ENCODE measurements at regions of chr20 and their contacts with region 1.

Region 1: DNA sequence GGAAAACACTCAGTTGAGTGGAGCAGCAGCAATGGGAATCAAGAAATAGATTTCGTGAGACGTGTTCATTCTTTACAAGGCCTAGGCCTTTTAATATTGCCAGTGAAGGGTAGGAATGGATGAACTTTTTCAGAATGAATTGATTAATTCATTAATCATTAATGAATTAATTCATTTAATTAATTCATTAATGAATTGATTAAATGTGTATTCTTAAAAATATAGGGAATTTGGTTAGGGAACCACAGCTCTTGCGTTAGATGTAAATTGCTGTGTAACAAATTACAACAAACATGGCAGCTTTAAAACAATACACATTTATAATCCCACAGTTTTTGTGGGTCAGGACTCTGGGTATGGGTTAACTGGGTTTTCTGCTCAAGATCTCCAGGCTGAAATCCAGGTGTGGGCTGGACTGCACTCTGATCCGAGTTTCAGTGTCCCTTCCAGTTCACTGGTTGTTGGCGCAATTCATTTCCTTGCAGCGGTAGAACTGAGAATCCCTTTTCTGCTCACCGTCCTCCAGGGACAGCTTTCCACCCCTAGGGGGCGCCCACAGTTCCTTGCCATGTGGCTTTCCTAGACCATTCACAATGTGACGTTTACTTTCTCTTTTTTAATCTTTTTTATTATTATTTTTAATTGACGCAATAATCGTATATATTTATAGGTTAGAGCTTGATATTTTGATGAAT is 32.8 kb upstream of the BCAS1 start:
- DNase-seq: peak; percentile 83
- H3K4me3 Mint-ChIP-seq: no peak overlapping the region
- H3K27ac Mint-ChIP-seq: no peak overlapping the region
- H3K4me1 Mint-ChIP-seq: peaks cover 21% of the 10 kb centered on the region
- H3K27me3 Mint-ChIP-seq: no peaks in the 10 kb centered on the region
- CTCF ChIP-seq: peak; percentile 77

Region 2: DNA sequence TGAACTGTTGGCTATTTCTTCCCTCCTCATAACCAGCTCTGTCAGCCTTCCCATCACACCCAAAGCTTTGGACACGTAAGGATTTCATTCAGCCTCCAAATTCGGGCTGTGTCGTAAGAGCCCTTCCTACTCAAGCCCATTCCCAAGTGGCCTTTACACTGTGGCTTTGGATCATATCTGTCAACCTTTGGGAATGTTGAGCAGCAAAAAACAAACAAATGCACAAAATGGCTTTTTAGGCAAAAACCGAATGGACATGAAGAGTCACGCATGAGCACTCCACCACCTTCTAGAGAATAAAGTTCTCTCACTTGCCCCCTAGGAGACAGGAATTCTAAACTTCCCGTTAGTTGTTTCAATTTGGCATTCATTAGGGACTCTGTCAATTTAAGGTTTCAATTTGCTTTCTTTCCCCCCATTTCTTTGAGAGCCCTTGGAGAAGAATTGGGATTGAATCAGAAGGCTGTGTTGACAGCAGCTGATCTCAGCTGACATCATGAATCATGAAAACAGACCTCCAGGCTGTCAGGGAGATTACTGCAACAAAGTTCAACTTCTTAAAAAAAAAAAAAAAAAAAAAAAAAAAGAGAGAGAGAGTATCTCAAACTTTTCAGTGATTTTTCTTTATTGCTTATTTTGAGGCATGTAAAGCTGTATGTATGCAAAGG is 143.2 kb before region 1 on chr20:
- CTCF ChIA-PET with region 1: no interaction called
- POLR2A ChIA-PET with region 1: no interaction called
- intact Hi-C with region 1: no loop called
- DNase-seq: no peak
- H3K4me3 Mint-ChIP-seq: no peak overlapping the region
- H3K27ac Mint-ChIP-seq: no peak overlapping the region
- H3K4me1 Mint-ChIP-seq: peaks cover 14% of the 10 kb centered on the region
- H3K27me3 Mint-ChIP-seq: no peaks in the 10 kb centered on the region
- CTCF ChIP-seq: no peak

Region 3: GRCh38 chr20:54062812-54063280 is 40.4 kb before region 1 on chr20:
- CTCF ChIA-PET with region 1: interaction called, 15 read pairs
- POLR2A ChIA-PET with region 1: interaction called, 11 read pairs
- intact Hi-C with region 1: no loop called
- DNase-seq: peak; percentile 64
- H3K4me3 Mint-ChIP-seq: no peak overlapping the region
- H3K27ac Mint-ChIP-seq: no peak overlapping the region
- H3K4me1 Mint-ChIP-seq: peaks cover 21% of the 10 kb centered on the region
- H3K27me3 Mint-ChIP-seq: no peaks in the 10 kb centered on the region
- CTCF ChIP-seq: peak; percentile 59

Region 4: GRCh38 chr20:54123587-54124180 is 20.5 kb after region 1 on chr20:
- CTCF ChIA-PET with region 1: interaction called, 66 read pairs
- POLR2A ChIA-PET with region 1: interaction called, 52 read pairs
- intact Hi-C with region 1: no loop called
- DNase-seq: peak; percentile 99
- H3K4me3 Mint-ChIP-seq: peak overlapping the region; percentile 45
- H3K27ac Mint-ChIP-seq: peak overlapping the region; percentile 96
- H3K4me1 Mint-ChIP-seq: peaks cover 37% of the 10 kb centered on the region
- H3K27me3 Mint-ChIP-seq: no peaks in the 10 kb centered on the region
- CTCF ChIP-seq: no peak

Region 5: DNA sequence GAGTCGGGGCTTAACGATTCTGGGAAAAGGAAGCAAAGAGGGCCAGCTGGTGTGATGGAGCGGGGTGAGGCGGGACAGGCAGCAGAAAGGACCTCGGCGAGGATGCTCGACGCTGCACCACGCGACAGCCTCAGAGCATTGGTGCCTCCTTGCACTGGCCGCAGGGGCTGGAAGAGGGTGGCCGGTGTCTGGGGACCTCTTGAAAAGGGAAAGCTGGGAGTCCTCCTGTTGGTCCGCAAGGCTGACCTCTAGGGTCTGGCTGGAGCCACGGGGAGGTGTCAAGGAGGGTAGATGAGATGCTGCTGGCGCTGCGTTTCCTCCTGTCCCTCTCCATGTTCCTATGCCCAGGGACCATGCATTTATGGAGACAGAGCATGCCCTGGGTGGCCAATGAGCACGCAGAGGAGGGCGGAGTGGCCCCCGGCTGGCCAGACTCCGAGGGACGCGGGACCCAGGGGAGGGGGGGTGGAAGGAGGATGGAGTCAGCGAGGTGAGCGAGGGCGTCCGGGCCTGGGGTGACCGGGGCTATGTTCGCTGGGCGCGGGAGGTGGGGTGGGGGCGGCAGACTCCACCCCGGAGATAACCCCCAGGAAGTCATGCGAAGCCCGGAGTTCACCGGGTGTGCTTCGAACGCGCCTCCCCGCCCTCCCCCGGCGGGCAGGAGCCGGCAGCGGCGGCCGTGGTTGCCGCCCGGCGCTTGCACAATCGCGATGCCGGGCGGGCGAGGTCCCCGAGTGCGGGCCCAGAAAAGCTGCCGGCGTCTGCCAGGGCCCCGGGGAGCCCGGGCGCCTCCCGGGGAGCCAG is 70.6 kb after region 1 on chr20 and contains the start of gene CYP24A1:
- CTCF ChIA-PET with region 1: interaction called, 25 read pairs
- POLR2A ChIA-PET with region 1: interaction called, 13 read pairs
- intact Hi-C with region 1: no loop called
- DNase-seq: peak; percentile 41
- H3K4me3 Mint-ChIP-seq: peak within 1 kb of the TSS; percentile 67
- H3K27ac Mint-ChIP-seq: no peak within 1 kb of the TSS
- H3K4me1 Mint-ChIP-seq: peaks cover 20% of the 10 kb centered on the region
- H3K27me3 Mint-ChIP-seq: no peaks in the 10 kb centered on the region
- CTCF ChIP-seq: no peak
- total RNA-seq, gene CYP24A1: 0.28 and 0.34 TPM in 2 replicates

Region 6: GRCh38 chr20:54188132-54188849 is 85.1 kb after region 1 on chr20:
- CTCF ChIA-PET with region 1: interaction called, 1,436 read pairs
- POLR2A ChIA-PET with region 1: interaction called, 10 read pairs
- intact Hi-C with region 1: no loop called
- DNase-seq: no peak
- H3K4me3 Mint-ChIP-seq: no peak overlapping the region
- H3K27ac Mint-ChIP-seq: no peak overlapping the region
- H3K4me1 Mint-ChIP-seq: peaks cover 24% of the 10 kb centered on the region
- H3K27me3 Mint-ChIP-seq: no peaks in the 10 kb centered on the region
- CTCF ChIP-seq: no peak

Region 7: DNA sequence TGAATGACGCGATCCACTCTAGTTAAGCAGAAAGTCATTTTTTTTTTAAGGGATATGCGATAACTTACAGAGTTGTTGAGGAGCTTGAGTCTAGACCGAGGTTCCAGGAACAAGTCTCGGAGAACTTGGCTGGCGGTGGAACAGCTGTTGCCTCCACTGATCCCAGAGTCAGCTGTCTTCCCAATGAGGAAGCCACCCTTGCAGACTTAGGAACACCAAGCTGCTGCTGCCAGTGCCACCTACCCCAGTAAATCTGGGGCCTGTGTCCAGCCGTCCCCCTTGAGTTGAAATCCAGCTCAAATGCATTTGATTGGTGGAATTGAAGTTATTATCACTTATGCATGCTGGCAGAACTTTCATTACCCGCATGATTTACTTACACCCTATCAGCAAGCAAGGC is 111.4 kb after region 1 on chr20:
- CTCF ChIA-PET with region 1: interaction called, 1,436 read pairs
- POLR2A ChIA-PET with region 1: no interaction called
- intact Hi-C with region 1: no loop called
- DNase-seq: no peak
- H3K4me3 Mint-ChIP-seq: no peak overlapping the region
- H3K27ac Mint-ChIP-seq: no peak overlapping the region
- H3K4me1 Mint-ChIP-seq: peaks cover 6% of the 10 kb centered on the region
- H3K27me3 Mint-ChIP-seq: no peaks in the 10 kb centered on the region
- CTCF ChIP-seq: no peak